HAP-1 (cell line): ENCODE measurements at regions of chr1 and their contacts with region 1.

Region 1: DNA sequence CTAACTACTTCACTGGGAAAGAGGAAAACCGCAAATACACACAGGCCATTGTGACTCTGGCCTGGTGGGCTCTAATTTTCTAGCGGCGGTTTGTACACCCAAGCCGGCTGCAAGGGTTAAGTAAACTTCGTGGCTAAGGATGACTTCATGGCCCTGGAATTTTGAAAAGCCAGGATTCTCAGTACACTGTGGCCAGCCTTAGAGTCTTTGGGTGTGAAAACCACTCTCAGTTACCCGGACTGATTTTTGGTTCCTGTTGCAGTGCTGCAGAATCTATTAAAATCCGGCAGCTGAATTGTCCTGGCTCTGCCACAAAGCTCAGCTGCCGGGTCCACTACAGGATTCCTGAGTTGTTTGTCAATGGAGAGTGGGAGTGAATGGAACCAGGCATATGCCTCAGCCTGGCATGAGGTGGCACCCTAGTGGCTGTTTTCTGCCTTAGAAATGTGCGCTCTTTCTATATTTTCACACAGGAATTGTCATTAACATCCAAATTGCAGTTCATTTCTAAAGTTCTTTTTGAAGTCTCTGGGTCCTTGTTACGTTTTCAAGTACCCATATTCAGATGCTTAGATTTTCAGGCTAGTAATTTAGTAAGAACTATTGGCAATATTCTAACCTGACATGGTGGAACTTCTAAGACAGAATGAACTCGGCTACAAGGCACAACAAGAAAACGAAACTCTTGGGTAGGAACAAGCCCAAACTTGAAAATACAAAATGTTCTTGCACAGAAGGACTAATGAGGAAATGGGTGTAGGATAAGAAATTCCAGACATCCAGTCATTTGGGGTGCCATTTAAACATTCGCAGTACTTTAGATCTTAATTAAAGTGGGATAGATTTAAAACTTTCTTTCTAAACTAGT is 255.9 kb downstream of the NFIA start:
- DNase-seq: peak; percentile 73 to 79
- H3K4me3 ChIP-seq: peak overlapping the region; percentile 0; the same call in 1 of the 2 replicates
- H3K4me1 ChIP-seq: peaks cover 30% of the 10 kb centered on the region
- H3K27me3 ChIP-seq: no peaks in the 10 kb centered on the region

Region 2: GRCh38 chr1:61049850-61050540 is 288.2 kb before region 1 on chr1:
- in situ Hi-C with region 1: loop called (anchors 25 kb)
- DNase-seq: peak; percentile 85 to 95
- H3K4me3 ChIP-seq: peak overlapping the region; percentile 64
- H3K4me1 ChIP-seq: peaks cover 4% of the 10 kb centered on the region; the same call in 1 of the 2 replicates
- H3K27me3 ChIP-seq: no peaks in the 10 kb centered on the region

Region 3: DNA sequence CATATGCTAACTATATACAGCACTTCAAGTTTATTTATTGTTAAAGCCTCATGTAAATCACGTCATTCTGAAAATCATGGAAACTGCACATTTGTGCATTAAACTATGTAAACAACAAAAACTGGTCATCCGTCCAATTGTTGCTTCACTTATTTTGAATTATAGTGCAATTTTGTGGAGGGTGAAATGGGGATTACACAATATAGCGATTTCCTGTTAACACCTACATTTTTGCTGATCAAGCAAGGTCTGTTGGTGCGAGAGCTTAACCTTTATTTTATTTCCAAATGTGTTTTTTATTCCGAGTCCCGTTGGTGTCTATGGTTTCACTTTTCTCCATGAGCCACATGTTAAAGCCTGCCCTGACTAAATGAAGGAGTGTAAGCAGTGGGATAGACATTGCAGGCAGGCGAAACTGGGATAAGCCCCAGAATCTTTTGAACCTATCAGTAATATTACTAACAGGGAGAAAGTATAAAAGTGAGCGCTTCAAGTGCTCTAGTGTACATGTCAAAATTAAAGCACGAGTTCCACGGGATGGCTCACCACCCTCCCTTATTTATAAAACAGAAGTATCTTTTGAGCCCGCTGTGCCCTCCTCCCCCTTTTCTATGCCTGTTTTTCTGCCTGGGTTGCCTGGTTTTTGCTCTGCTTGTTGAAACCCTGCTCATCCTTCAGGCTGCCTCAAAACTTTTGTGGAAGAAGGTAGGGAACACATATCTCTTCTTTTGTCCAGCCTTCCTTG is 135.2 kb before region 1 on chr1:
- in situ Hi-C with region 1: no loop called
- DNase-seq: no peak
- H3K4me3 ChIP-seq: no peak overlapping the region
- H3K4me1 ChIP-seq: no peaks in the 10 kb centered on the region
- H3K27me3 ChIP-seq: no peaks in the 10 kb centered on the region